ENCODE measurements at regions of chr1 and their contacts with region 1.

Region 1: GRCh38 chr1:145927063-145927886 is at the start of gene RBM8A:
- DNase-seq: peak; percentile 85 to 97 (median 96)
- H3K4me3 ChIP-seq: peak within 1 kb of the TSS; percentile 89
- H3K4me3 Mint-ChIP-seq: peak within 1 kb of the TSS in 3 of 7 donors; percentile 47 to 84 (median 57)
- H3K27ac ChIP-seq: peak within 1 kb of the TSS; percentile 93
- H3K27ac Mint-ChIP-seq: peak within 1 kb of the TSS in 4 of 8 donors; percentile 74 to 92 (median 82)
- H3K4me1 ChIP-seq: peaks cover 29% of the 10 kb centered on the region
- H3K4me1 Mint-ChIP-seq: peaks cover 10 to 22% (median 20%) of the 10 kb centered on the region in 3 donors
- H3K27me3 ChIP-seq: no peaks in the 10 kb centered on the region
- H3K27me3 Mint-ChIP-seq: no peaks in the 10 kb centered on the region
- total RNA-seq, gene RBM8A: 387 to 397 TPM

Region 2: GRCh38 chr1:145891587-145892485 is 35.4 kb before region 1 on chr1:
- CTCF ChIA-PET with region 1: no interaction called
- POLR2A ChIA-PET with region 1: no interaction called
- DNase-seq: peak in 4 of 5 donors; percentile 6 to 59 (median 32)
- H3K4me3 ChIP-seq: no peak overlapping the region
- H3K4me3 Mint-ChIP-seq: no peak overlapping the region
- H3K27ac ChIP-seq: no peak overlapping the region
- H3K27ac Mint-ChIP-seq: peak overlapping the region in 1 of 8 donors; percentile 83
- H3K4me1 ChIP-seq: no peaks in the 10 kb centered on the region
- H3K4me1 Mint-ChIP-seq: peaks cover 0 to 1% (median under 1%) of the 10 kb centered on the region in 3 donors
- H3K27me3 ChIP-seq: no peaks in the 10 kb centered on the region
- H3K27me3 Mint-ChIP-seq: no peaks in the 10 kb centered on the region

Region 3: DNA sequence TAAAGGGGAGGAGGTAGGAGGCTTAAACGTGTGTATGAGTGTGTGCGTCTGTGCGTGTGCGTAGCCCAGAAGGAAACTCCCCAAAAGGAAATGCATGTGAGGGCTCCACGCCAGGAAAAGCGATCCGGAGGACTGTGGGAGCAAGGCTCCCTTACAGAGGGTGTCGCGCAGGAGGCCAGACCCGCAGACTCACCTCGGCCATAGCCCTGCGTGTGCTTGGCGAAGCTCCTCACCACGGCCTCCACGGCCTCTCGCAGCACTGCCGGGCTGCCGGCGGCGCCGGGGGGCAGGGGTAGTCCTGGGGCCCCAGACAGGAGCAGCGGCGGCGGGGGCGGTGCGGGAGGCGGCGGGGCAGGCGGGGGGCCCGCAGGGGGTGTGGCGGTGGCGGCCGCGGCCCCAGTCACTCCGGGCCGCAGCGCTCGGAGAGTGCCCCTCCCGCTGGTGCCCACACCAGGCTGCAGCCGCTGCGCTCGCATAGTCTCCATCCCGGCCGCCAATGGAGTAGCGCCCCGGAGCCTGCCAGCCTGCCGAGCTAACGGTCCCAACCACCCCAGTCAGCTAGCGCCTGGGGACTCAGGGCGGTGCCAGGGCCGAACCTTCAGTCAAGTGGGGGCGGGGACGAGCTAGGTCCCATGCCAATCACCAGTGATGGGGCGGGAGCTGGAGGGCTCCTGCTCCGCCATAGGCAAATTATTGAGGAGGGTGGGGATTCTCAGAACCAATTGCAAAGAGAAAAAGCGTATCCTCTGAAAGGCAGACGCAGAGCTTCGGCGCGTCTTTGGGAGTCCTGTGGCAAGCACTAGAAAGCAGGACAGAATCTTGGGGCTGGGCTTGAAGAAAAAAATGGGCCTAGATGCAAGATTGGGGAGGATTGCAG is 30.4 kb after region 1 on chr1 and contains the start of gene LIX1L:
- CTCF ChIA-PET with region 1: interaction called, 24 read pairs
- POLR2A ChIA-PET with region 1: interaction called, 87 read pairs
- DNase-seq: peak; percentile 92 to 96 (median 93)
- H3K4me3 ChIP-seq: peak within 1 kb of the TSS; percentile 94
- H3K4me3 Mint-ChIP-seq: peak within 1 kb of the TSS; percentile 83 to 98 (median 92)
- H3K27ac ChIP-seq: peak within 1 kb of the TSS; percentile 76
- H3K27ac Mint-ChIP-seq: peak within 1 kb of the TSS; percentile 91 to 98 (median 97)
- H3K4me1 ChIP-seq: peaks cover 64% of the 10 kb centered on the region
- H3K4me1 Mint-ChIP-seq: peaks cover 68 to 74% (median 74%) of the 10 kb centered on the region in 3 donors
- H3K27me3 ChIP-seq: no peaks in the 10 kb centered on the region
- H3K27me3 Mint-ChIP-seq: peaks cover 0 to 3% of the 10 kb centered on the region in 2 donors
- total RNA-seq, gene LIX1L: 41.8 to 42.6 TPM